Posterior vena cava (tissue), 2 donors: ENCODE measurements at regions of chr17 and their contacts with region 1.

Region 1: DNA sequence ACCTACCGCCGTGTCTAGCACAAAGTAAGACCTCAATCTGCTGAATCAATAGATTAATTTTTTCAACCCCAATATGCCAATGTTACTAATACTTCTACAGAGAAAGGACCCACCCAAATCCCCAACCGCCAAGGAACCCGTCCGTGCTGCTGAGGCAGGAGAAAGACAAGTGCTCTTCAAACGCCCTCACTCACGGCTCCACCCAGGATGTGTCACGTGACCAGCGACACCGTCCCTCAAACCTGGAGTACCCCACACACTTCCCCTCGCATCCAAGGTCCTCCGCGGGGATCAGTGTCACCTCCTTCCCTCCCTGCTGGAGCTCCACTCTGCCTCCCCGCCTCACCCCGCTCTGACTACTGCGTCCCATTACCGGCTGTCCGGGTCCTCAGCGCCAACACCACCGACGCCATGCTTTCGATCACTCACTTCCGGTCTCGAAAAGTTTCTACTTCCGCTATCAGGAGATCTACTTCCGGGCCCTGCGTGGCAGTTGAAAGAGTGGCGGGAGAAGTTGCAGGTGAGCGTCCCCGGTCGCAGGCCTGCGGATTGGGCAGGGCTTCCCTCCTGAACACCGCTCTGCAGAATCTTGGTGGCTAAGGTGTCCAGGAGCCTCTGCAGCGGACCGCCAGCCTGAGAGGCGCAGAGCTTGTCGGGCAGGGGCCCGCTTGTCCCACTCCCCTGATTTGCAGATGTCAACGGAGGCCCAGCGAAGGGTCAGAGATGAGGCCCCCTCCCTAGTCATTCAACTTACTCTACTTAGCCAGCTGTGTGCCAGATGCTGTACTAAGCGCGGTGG is at the starts of genes EME1 and MRPL27:
- DNase-seq: peak; percentile 95
- total RNA-seq, gene EME1: 0.62 to 1.4 TPM
- total RNA-seq, gene MRPL27: 38.2 to 40.1 TPM

Region 2: GRCh38 chr17:49987681-49988441 is 385.1 kb before region 1 on chr17:
- intact Hi-C with region 1: loop called in 1 of 2 experiments (anchors 2 kb)
- DNase-seq: peak; percentile 68